ENCODE measurements at regions of chr10 and their contacts with region 1.

Region 1: DNA sequence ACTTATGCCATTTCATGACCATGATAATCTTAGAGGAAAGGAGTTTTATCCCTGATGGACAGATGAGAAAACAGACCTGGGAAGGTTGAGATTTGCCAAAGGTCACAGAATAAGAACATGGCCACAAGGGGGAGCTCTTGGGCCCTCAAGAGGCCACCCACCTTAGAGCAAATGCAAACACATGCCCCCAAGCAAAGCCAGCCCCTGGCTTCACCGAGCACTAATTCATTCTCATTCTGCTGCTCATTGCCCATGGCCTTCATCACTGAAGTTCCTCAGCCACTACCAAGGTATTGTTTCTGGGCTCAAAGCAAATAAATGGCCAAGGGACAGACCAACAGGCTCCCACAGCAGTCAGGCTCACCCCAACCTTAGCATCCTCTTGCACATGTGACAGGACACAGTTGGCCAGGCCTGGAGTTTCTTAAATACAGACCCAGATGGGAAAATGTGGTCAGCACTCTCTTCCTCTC is 44.2 kb downstream of the PDLIM1 start:
- DNase-seq: no peak
- H3K4me3 ChIP-seq: no peak overlapping the region
- H3K27ac ChIP-seq: peak overlapping the region; percentile 93
- H3K27me3 ChIP-seq: no peaks in the 10 kb centered on the region
- CTCF ChIP-seq: peak; percentile 78

Region 2: GRCh38 chr10:94735197-94735596 is 511.4 kb before region 1 on chr10:
- CTCF ChIA-PET with region 1: no interaction called
- POLR2A ChIA-PET with region 1: no interaction called
- DNase-seq: no peak
- H3K4me3 ChIP-seq: no peak overlapping the region
- H3K27ac ChIP-seq: no peak overlapping the region
- H3K27me3 ChIP-seq: no peaks in the 10 kb centered on the region
- CTCF ChIP-seq: no peak

Region 3: DNA sequence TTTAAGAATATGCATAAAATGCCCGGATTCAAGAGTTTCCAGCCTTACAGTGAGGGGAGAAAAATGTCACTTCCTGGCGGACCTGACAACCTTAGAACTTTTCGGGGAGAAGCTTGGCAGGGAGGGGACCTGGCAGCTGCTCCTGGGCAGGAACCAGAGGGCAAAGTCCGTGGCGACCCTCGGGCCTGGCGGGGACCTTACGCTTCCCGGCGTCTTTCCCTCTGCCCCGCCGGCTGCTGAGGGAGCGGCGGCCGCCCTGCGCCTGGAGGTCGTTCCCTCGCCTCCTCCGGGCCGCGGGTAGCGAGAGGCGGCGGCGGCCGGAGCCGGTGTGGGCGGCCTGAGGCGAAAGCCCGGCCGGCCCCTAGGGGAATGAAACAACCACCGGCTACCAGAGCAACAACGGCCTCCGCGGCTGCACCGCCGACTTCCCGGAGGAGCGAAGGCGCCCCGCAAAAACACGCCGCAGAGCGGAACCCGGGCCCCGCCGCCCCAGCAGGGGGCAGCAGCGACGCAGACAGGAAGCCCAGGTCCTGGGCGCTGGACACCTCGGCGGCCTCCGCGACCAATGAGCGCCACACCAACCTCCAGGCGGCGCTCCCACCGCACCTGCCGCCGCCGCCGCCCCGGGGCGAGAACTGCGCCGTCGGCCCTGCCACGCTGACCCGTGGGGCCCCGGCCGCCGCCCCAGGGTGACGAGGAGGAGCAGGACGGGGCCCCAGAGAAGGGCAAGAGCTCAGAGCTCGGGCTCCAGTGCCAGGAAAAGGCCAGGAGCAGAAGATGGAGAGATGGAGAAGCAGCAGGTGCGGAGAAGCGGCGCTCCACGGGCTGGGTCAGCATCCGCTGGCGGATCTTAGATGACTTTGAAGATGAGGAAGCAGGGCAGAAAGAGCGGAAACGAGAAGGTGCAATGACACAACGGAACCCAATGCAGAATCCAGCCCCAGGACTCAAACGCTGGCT is 63.1 kb before region 1 on chr10:
- CTCF ChIA-PET with region 1: interaction called, 89 read pairs
- POLR2A ChIA-PET with region 1: no interaction called
- DNase-seq: peak; percentile 58
- H3K4me3 ChIP-seq: peak overlapping the region; percentile 65
- H3K27ac ChIP-seq: no peak overlapping the region
- H3K27me3 ChIP-seq: peaks cover 8% of the 10 kb centered on the region
- CTCF ChIP-seq: peak; percentile 81

Region 4: GRCh38 chr10:95236068-95236903 is 10.3 kb before region 1 on chr10:
- CTCF ChIA-PET with region 1: interaction called, 73 read pairs
- POLR2A ChIA-PET with region 1: no interaction called
- DNase-seq: no peak
- H3K4me3 ChIP-seq: no peak overlapping the region
- H3K27ac ChIP-seq: peak overlapping the region; percentile 77
- H3K27me3 ChIP-seq: no peaks in the 10 kb centered on the region
- CTCF ChIP-seq: no peak

Region 5: DNA sequence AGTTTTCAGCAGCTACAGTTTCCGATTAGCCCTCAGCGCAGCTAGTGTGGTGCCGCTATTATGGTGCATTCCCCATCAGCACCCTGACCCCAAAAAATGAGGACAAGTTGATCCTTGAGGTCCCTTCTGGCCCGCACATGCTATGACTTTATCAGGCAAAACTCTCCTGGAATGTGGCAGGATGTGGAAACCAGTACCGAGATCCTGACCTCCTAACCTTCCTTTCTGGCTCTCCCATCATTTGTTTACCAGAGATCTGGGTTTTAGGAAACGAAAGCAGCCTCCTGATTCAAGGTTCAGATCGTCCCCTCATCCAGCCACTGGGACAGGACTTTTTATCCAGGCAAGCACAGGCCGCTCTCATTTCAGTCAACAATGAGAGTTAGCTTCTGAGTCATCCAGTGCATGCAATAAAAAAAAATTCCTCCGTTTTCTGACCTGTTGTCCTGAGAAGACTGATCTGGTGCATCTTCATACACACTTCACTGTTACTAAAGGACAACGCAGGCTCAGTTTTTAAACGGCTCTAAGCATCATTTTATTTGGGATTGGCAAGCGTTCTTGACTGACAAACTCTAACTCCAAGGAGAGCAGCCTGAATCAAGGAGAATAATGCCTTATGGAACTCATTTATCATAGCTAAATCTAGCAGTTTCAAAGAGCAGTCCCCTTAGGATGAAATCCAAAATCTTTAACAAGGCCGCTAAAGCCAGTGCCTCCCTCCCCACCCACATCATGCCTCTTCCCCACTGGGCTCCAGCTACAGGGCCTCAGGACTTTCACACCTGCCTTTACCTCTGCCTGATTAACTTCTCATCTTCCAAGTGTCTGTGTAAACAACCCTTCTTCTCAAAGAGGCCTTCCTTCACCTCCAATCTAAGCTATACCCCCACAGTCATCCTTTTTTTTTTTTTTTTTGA is 27.0 kb after region 1 on chr10:
- CTCF ChIA-PET with region 1: interaction called, 31 read pairs
- POLR2A ChIA-PET with region 1: interaction called, 6 read pairs
- DNase-seq: peak; percentile 65
- H3K4me3 ChIP-seq: peak overlapping the region; percentile 10; the same call in 1 of the 2 replicates
- H3K27ac ChIP-seq: peak overlapping the region; percentile 94
- H3K27me3 ChIP-seq: no peaks in the 10 kb centered on the region
- CTCF ChIP-seq: no peak

Region 6: DNA sequence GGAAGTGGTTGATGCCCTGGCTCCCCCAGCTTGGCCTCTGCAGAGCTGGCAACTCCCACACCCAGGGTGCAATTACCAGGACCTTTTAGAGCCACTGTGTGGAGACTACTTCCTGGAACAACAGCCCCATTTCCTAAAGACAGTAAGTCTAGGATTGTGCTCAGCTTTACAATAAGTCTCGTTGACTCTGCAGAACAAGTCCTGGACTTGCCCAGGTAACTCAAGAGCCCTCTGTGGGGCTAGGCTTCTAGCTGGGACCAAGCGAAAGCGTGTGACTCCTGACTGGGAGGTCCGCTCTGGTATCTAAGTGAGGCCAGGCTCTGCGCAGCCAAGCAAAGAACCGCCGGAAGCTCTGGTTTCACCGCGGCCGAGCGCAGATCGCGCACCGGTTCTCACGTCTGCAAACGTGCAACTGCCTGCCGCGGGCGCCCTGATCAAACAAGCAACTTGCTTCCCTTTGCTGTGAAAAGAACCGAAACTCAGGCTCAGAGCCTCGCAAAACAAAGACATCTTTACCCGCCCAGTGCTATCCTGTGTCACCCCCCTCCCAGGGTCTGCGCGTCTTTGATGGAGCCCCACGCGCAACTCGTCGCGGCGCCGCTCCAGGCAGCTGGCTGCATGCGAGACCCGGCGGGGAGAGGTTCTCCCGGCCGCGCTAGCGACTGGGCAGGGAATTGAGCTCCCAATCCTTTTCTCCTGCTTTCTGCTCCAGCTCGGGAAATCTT is 48.6 kb after region 1 on chr10:
- CTCF ChIA-PET with region 1: interaction called, 14 read pairs
- POLR2A ChIA-PET with region 1: interaction called, 6 read pairs
- DNase-seq: no peak
- H3K4me3 ChIP-seq: peak overlapping the region; percentile 44
- H3K27ac ChIP-seq: no peak overlapping the region
- H3K27me3 ChIP-seq: no peaks in the 10 kb centered on the region
- CTCF ChIP-seq: no peak

Region 7: GRCh38 chr10:95363303-95363912 is 116.8 kb after region 1 on chr10:
- CTCF ChIA-PET with region 1: interaction called, 507 read pairs
- POLR2A ChIA-PET with region 1: interaction called, 8 read pairs
- DNase-seq: no peak
- H3K4me3 ChIP-seq: no peak overlapping the region
- H3K27ac ChIP-seq: no peak overlapping the region
- H3K27me3 ChIP-seq: peaks cover 5% of the 10 kb centered on the region
- CTCF ChIP-seq: peak; percentile 88